ENCODE measurements at regions of chr12 and their contacts with region 1.

Region 1: DNA sequence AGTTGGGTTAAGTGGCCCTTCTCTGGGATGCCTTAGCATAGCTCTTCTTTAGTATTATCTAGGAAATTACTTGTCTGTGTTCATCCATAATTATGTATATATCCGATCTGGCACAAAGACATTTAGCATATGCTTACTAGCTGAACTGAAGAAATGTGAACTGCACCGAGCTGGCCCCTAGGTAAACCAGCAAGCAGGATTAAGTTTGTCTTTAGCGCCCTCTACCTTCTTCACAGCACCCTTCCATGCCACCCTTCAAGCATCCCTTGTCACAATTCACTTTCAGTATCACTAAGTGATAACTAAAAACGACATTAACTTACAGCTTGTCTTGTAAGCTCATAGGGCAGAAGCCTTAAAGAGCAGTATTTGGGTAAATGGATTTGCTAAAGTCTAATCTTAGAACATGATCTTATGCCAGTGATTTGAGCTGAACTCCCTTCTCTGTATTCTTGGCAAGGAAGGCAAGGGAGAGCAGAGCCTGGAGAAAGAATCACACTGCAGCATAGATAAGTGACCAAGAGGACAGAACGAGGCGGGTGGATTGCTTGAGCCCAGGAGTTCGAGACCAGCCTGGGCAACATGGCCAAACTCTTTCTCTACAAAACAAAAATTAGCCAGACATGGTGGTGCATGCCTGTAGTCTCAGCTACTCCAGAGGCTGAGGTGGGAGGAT is 2.6 kb upstream of the HAL start:
- DNase-seq: peak; percentile 72
- CTCF ChIP-seq: peak; percentile 70

Region 2: DNA sequence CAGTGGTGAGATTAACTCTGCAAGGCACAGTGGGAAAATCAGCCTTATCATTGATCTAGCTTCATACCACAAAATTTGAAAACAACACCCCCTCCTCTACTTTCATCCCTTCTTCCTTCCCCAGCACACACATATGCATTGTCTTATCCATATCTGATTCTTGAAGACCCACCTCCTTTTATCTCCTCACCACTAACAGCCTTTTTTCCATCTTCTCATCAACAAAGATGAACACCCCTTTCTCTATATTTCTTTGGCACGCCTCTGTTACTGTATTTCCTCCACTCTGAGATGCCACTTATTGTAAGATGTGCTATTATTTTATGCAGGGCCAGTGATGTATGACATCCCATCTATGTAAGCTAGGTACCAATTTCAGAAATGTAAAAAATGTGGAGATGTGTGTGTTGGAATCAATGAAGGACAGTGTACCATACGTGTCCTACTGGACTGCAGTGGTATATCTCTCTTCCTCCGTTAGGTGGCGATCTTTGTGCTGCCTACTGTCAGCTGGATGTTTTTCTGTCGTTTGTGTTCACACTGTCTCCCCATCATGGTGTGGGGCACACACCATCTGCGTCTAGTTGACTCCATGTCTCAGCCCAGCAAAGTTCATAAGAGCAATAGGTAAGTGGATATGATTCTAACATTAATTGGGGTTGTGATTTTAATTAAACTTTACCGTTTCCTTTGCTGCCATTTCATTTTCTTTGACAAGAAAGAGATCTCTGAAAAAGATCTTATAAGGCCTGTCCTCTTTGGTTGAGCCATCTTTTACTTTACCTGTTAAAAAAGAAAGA is 80.4 kb before region 1 on chr12:
- CTCF ChIA-PET with region 1: interaction called, 19 read pairs
- POLR2A ChIA-PET with region 1: no interaction called
- DNase-seq: peak; percentile 48
- CTCF ChIP-seq: peak; percentile 77

Region 3: DNA sequence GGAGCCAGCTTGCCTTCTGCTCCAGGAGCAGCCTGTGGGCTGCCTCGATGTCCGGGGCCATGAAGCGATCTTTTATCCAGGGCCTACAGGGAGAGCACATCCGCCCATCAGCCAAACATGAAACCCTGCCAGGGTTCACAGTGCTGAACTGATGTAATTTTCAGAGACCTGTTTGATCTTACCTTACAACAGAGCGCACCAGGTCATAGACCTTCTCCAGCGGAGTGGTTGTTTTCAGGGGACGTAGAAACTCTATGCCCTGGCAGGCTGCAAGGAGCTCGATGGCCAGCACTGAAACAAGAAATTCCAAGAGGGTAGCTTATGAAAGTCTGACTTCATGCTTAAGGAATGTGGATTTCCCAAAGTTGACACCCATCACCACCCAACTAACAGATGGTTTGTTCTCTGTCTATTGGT is 22.3 kb before region 1 on chr12:
- CTCF ChIA-PET with region 1: interaction called, 13 read pairs
- POLR2A ChIA-PET with region 1: no interaction called
- DNase-seq: no peak
- CTCF ChIP-seq: no peak

Region 4: DNA sequence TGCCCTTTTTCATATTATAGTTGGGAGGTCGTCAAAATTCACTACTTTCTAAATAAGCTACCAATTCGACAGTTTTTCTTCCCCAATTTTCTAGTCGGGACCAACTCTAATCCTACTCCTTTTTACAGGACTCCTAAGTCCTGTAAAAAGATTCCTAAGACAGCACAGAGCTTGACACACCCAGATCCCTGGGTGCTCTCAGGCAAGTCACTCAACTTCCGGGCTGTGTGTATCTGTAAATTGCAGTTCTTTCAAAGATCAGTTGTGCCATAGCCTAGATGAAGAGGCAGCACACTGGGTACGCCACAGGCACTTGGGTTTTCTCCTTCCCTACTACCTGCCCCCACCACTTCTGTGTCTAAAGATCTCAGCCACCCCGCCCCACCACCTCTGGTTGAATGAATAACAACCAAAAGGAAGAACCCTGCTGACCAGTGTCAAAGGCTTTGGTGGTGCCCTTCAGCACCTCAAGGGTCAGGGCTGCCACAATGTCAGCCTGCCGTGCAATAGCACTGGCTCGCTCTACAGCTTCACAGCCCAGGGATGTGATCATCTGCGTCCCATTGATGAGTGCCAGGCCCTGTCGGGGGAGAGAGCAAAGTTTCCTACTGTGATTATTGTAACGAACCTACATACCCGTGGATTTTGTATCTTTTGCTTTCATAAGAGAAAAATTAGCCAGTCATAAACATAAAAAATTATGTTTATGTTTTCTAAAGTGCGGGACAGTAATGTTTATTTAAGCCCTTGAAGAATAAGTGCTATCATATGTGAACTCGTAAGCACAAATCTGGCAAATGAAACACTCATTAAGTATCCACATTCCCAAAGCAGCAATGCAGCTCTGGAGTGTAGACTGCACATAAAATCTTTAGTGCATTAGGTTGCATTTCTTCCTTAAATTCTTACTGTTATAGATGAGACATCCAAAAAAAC is 11.8 kb before region 1 on chr12:
- CTCF ChIA-PET with region 1: interaction called, 17 read pairs
- POLR2A ChIA-PET with region 1: no interaction called
- DNase-seq: no peak
- CTCF ChIP-seq: no peak

Region 5: GRCh38 chr12:96015672-96016071 is 16.9 kb after region 1 on chr12:
- CTCF ChIA-PET with region 1: interaction called, 28 read pairs
- POLR2A ChIA-PET with region 1: no interaction called
- DNase-seq: no peak
- CTCF ChIP-seq: no peak

Region 6: DNA sequence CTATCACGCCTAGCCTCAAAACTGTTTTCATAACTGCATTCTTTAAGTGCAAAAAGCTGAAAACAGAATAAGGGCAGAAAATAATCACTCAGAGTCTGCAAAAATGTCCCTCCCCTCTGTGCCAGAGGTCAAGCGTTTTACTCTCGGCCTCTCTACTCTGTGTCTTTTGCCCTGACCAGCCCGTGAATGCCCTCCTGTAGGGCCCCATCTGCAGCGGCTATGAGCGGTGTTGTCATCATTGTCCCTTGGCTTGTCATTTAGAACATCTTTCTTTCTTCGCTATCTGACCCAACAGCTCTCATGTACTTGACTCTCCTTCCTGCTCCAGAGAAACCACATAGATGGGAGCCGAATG is 217.1 kb after region 1 on chr12:
- CTCF ChIA-PET with region 1: interaction called, 12 read pairs
- POLR2A ChIA-PET with region 1: no interaction called
- DNase-seq: no peak
- CTCF ChIP-seq: no peak

Region 7: GRCh38 chr12:96456265-96456974 is 457.7 kb after region 1 on chr12:
- CTCF ChIA-PET with region 1: no interaction called
- POLR2A ChIA-PET with region 1: no interaction called
- DNase-seq: peak; percentile 36
- CTCF ChIP-seq: no peak

Measured in GM10248 (cell line).